ENCODE measurements at regions of chr12 and their contacts with region 1.

Region 1: DNA sequence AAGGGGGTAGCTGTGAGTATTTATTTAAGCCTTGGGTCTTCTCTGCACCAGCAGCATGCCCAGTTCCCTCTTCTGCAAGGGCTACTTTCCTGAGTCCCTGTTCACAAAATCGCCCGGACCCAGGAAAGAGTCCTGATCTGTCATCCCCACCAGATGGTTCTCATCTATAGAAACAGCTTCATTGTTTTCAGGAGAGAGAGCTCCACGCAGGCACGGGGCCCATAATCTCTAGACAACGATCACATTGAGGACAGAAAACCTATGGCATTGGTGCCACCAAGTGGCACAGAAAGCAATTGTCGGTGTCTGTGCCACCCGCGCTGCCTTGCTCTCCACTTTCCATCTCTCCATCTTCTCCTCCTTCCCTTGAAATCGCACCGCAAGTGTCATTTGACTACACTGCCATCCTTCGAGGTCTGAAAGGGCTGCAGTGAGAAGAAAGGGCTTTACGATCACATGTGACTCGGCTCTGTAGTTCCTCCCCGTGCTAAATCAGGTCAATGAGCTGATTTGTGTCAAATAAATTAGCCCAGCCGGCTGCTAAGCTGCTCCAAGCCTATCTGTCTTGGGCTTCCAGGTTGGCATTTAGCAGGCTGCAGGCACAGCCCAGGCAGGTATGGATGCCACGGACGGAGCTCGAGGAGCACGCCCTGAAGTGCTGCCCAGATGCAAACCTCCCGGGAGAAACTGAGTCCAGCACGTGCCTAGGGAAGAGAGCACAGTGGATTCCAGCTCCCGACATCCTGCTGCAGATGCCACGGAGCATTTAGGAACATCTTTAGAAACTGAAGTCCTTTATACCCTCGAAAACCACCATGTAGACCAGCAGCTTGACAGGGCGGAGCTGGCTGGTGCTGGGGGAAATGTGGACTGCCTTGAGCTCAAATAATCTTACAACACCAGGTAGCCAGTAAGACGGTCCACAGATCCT is 28.8 kb downstream of the SPRING1 start:
- DNase-seq: peak; percentile 42
- ATAC-seq: peak; percentile 89
- H3K4me3 Mint-ChIP-seq: peak overlapping the region; percentile 70
- H3K27ac Mint-ChIP-seq: no peak overlapping the region
- H3K4me1 Mint-ChIP-seq: peaks cover 25% of the 10 kb centered on the region
- H3K27me3 Mint-ChIP-seq: peaks cover 2% of the 10 kb centered on the region
- CTCF ChIP-seq: peak; percentile 53

Region 2: DNA sequence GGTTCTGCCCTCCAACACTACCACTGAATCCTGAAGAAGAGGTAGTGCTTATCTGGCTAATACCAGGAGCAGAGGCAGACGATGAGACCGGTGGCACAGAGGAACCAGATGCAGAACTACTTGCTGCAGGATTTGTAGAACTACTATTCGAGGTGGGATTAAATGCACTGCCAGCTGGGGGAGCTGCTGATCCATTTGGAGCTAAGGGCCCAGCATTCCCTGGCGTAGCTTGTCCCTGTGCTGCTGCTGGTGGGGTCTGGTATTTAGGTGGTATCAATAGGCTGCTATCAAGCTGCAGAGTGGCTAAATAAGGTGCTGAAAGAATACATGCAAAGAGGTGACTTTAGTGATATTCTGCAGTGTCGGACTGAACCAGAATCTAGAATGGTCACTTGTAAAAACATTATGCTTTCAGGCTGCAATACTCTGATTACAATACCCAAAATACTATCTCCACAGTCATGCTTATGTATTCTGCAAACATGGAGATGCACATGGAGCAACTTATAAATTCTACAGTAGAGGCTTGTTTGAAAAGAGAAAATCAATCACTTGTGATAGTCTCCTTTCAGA is 725.8 kb before region 1 on chr12:
- CTCF ChIA-PET with region 1: interaction called, 14 read pairs
- POLR2A ChIA-PET with region 1: no interaction called
- intact Hi-C with region 1: no loop called
- DNase-seq: no peak
- ATAC-seq: no peak
- H3K4me3 Mint-ChIP-seq: no peak overlapping the region
- H3K27ac Mint-ChIP-seq: no peak overlapping the region
- H3K4me1 Mint-ChIP-seq: peaks cover 12% of the 10 kb centered on the region
- H3K27me3 Mint-ChIP-seq: no peaks in the 10 kb centered on the region
- CTCF ChIP-seq: no peak

Region 3: GRCh38 chr12:115998119-115998633 is 710.9 kb before region 1 on chr12:
- CTCF ChIA-PET with region 1: interaction called, 45 read pairs
- POLR2A ChIA-PET with region 1: interaction called, 3 read pairs
- intact Hi-C with region 1: loop called (anchors 1 kb)
- DNase-seq: no peak
- ATAC-seq: peak; percentile 90
- H3K4me3 Mint-ChIP-seq: no peak overlapping the region
- H3K27ac Mint-ChIP-seq: peak overlapping the region; percentile 78
- H3K4me1 Mint-ChIP-seq: peaks cover 10% of the 10 kb centered on the region
- H3K27me3 Mint-ChIP-seq: no peaks in the 10 kb centered on the region
- CTCF ChIP-seq: peak; percentile 57

Region 4: GRCh38 chr12:116066381-116067230 is 642.5 kb before region 1 on chr12:
- CTCF ChIA-PET with region 1: interaction called, 6 read pairs
- POLR2A ChIA-PET with region 1: no interaction called
- intact Hi-C with region 1: loop called (anchors 2 kb)
- DNase-seq: peak; percentile 34
- ATAC-seq: peak; percentile 71
- H3K4me3 Mint-ChIP-seq: no peak overlapping the region
- H3K27ac Mint-ChIP-seq: peak overlapping the region; percentile 60
- H3K4me1 Mint-ChIP-seq: peaks cover 44% of the 10 kb centered on the region
- H3K27me3 Mint-ChIP-seq: no peaks in the 10 kb centered on the region
- CTCF ChIP-seq: peak; percentile 96

Region 5: DNA sequence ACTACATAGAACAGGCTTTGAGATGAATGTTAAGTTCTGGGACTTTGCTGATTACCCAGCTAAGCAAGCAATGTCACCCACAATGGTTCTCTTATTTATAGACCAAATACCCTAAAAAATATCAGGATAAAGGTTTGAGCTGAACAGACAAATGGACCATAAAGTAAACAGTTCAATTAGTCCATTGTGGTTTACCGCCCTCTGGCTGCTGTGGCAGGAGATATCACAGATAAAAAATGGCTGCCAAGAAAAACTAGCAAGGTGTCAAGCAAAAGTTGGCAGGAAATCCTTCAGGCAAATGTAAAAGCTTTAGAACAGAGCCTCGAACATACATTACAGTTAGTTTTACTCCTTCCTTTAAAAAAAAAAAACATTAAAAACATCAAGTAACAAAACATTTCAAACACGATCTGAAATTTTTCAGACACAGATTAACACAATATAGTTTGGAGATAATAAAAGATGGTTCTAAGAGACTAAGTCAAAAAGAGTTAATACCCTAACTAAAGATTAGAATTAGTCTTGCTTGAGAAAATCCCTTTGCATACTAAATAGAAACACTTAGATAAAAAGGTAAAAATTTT is 472.9 kb before region 1 on chr12:
- CTCF ChIA-PET with region 1: interaction called, 16 read pairs
- POLR2A ChIA-PET with region 1: no interaction called
- intact Hi-C with region 1: loop called (anchors 5 kb)
- DNase-seq: no peak
- ATAC-seq: peak; percentile 65
- H3K4me3 Mint-ChIP-seq: no peak overlapping the region
- H3K27ac Mint-ChIP-seq: peak overlapping the region; percentile 67
- H3K4me1 Mint-ChIP-seq: peaks cover 44% of the 10 kb centered on the region
- H3K27me3 Mint-ChIP-seq: no peaks in the 10 kb centered on the region
- CTCF ChIP-seq: peak; percentile 40

Measured in activated B cell treated with CpG ODN at 0.5 μM for 24 hours (primary cell).